Ovary (tissue), 10 donors: ENCODE measurements at regions of chr7 and their contacts with region 1.

Region 1: GRCh38 chr7:96359876-96360275 is 38.0 kb upstream of the SLC25A13 start:
- DNase-seq: no peak
- H3K4me3 ChIP-seq: no peak overlapping the region
- H3K27ac ChIP-seq: no peak overlapping the region
- H3K4me1 ChIP-seq: no peaks in the 10 kb centered on the region
- H3K27me3 ChIP-seq: no peaks in the 10 kb centered on the region
- CTCF ChIP-seq: no peak
- EP300 ChIP-seq: no peak
- POLR2A ChIP-seq: no peak

Region 2: GRCh38 chr7:96297876-96298275 is 62.0 kb before region 1 on chr7:
- intact Hi-C with region 1: no loop called
- DNase-seq: no peak
- H3K4me3 ChIP-seq: no peak overlapping the region
- H3K27ac ChIP-seq: no peak overlapping the region
- H3K4me1 ChIP-seq: peaks cover 1% of the 10 kb centered on the region
- H3K27me3 ChIP-seq: no peaks in the 10 kb centered on the region
- CTCF ChIP-seq: no peak
- EP300 ChIP-seq: no peak
- POLR2A ChIP-seq: no peak

Region 3: DNA sequence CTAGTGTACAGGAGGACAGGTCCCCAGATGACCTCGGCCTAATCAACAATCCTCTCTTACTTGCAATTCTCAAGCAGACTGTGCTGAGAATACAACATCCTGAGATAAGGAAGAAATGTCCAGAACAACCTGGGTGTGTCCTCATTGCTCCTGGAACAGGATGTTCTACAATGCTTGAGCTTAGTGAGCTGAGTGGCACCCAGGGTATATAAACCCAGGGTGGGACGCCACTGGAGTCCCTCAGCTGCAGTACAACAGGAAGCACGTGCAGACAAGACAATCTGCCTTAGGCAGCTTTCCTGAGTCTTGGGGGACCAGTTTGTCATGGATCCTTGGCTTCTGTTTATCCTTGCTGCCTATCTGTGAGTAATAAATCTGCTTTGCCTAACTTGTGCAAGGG is 10.3 kb before region 1 on chr7:
- intact Hi-C with region 1: loop called in 1 of 4 experiments (anchors 1 kb)
- DNase-seq: no peak
- H3K4me3 ChIP-seq: no peak overlapping the region
- H3K27ac ChIP-seq: no peak overlapping the region
- H3K4me1 ChIP-seq: no peaks in the 10 kb centered on the region
- H3K27me3 ChIP-seq: no peaks in the 10 kb centered on the region
- CTCF ChIP-seq: no peak
- EP300 ChIP-seq: no peak
- POLR2A ChIP-seq: no peak

Region 4: GRCh38 chr7:96426027-96426426 is 66.2 kb after region 1 on chr7:
- intact Hi-C with region 1: no loop called
- DNase-seq: no peak
- H3K4me3 ChIP-seq: no peak overlapping the region
- H3K27ac ChIP-seq: no peak overlapping the region
- H3K4me1 ChIP-seq: no peaks in the 10 kb centered on the region
- H3K27me3 ChIP-seq: no peaks in the 10 kb centered on the region
- CTCF ChIP-seq: no peak
- EP300 ChIP-seq: no peak
- POLR2A ChIP-seq: no peak